Cardiac septum (tissue), 1 donor: ENCODE measurements at regions of chr13 and their contacts with region 1.

Region 1: GRCh38 chr13:113499936-113500335 is 9.4 kb upstream of the DCUN1D2 start:
- DNase-seq: no peak

Region 2: GRCh38 chr13:113208424-113209335 is 291.3 kb before region 1 on chr13 and contains the start of gene PCID2:
- intact Hi-C with region 1: no loop called
- DNase-seq: peak; percentile 94
- total RNA-seq, gene PCID2: 47.8 TPM

Region 3: DNA sequence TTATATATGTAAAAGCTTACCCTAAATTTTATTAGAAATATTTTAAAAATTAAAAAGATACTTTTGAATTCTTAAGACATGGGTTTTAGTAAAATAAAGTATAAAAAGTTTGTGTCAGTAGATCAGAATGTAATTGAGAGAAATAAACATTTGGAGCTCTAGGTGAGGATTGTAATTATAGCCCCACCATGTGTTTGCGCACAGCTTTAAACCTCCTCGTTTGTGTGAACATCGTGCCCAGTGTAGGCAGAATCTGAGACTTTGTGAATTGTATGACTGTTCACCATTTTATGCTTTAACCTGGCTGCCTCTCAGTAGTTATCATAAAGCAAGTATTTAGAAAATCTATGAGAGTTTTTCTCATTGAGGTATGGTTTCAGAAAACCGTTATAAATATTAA is 261.4 kb before region 1 on chr13:
- intact Hi-C with region 1: no loop called
- DNase-seq: no peak

Region 4: GRCh38 chr13:113483504-113484293 is 16.2 kb before region 1 on chr13:
- intact Hi-C with region 1: loop called (anchors 2 kb)
- DNase-seq: no peak

Region 5: DNA sequence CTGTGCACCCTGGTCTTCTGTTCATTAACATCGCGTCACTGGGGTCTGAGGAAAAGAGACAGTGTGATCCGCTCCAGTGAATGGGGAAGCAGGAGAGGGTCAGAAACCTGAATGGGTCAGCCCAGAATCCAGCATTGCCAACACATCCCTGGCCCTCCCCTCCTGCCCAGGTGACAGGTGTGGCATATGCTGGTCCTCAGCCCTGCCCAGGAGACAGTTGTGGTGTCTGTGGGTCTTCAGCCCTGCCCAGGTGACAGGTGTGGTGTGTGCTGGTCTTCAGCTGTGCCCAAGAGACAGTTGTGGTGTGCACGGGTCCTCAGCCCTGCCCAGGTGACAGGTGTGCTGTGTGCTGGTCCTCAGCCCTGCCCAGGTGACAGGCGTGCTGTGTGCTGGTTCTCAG is 92.6 kb after region 1 on chr13:
- intact Hi-C with region 1: no loop called
- DNase-seq: peak; percentile 47

Region 6: GRCh38 chr13:113666951-113667701 is 167.2 kb after region 1 on chr13 and contains the start of gene GRK1:
- intact Hi-C with region 1: no loop called
- DNase-seq: peak; percentile 69
- total RNA-seq, gene GRK1: 0.48 TPM